Transverse colon (tissue), 4 donors: ENCODE measurements at regions of chr1 and their contacts with region 1.

Region 1: GRCh38 chr1:111656086-111657017 is 36.8 kb downstream of the RAP1A start:
- DNase-seq: peak; percentile 26
- H3K4me3 ChIP-seq: no peak overlapping the region
- H3K27ac ChIP-seq: peak overlapping the region; percentile 7 to 38 (median 15)
- H3K4me1 ChIP-seq: peaks cover 32 to 83% (median 37%) of the 10 kb centered on the region in 4 donors
- H3K27me3 ChIP-seq: no peaks in the 10 kb centered on the region
- CTCF ChIP-seq: peak; percentile 44 to 68 (median 62)
- EP300 ChIP-seq: no peak
- POLR2A ChIP-seq: no peak

Region 2: GRCh38 chr1:111139956-111140679 is 516.2 kb before region 1 on chr1 and contains the starts of genes CEPT1 and DRAM2:
- in situ Hi-C with region 1: no loop called
- intact Hi-C with region 1: no loop called
- DNase-seq: peak; percentile 96
- H3K4me3 ChIP-seq: peak within 1 kb of the TSS; percentile 83 to 92 (median 89)
- H3K27ac ChIP-seq: peak within 1 kb of the TSS; percentile 96 to 97 (median 97)
- H3K4me1 ChIP-seq: peaks cover 6 to 30% (median 27%) of the 10 kb centered on the region in 4 donors
- H3K27me3 ChIP-seq: no peaks in the 10 kb centered on the region
- CTCF ChIP-seq: no peak
- EP300 ChIP-seq: no peak
- POLR2A ChIP-seq: peak; percentile 79
- total RNA-seq, gene CEPT1: 11.2 to 55.6 (median 26.9) TPM
- total RNA-seq, gene DRAM2: 36.2 to 116 (median 81.7) TPM

Region 3: GRCh38 chr1:111290630-111291029 is 365.7 kb before region 1 on chr1 and contains the start of gene CHIA:
- in situ Hi-C with region 1: no loop called
- intact Hi-C with region 1: no loop called
- DNase-seq: no peak
- H3K4me3 ChIP-seq: no peak within 1 kb of the TSS
- H3K27ac ChIP-seq: no peak within 1 kb of the TSS
- H3K4me1 ChIP-seq: no peaks in the 10 kb centered on the region
- H3K27me3 ChIP-seq: peaks cover 4% of the 10 kb centered on the region
- CTCF ChIP-seq: no peak
- EP300 ChIP-seq: no peak
- POLR2A ChIP-seq: no peak
- total RNA-seq, gene CHIA: not detected

Region 4: GRCh38 chr1:111507411-111508201 is 148.7 kb before region 1 on chr1:
- in situ Hi-C with region 1: loop called in 1 of 4 experiments (anchors 10 kb)
- intact Hi-C with region 1: loop called (anchors 5 kb)
- DNase-seq: peak; percentile 84
- H3K4me3 ChIP-seq: peak overlapping the region in 3 of 4 donors; percentile 19 to 46 (median 30)
- H3K27ac ChIP-seq: peak overlapping the region; percentile 91 to 98 (median 98)
- H3K4me1 ChIP-seq: peaks cover 21 to 52% (median 37%) of the 10 kb centered on the region in 4 donors
- H3K27me3 ChIP-seq: no peaks in the 10 kb centered on the region
- CTCF ChIP-seq: no peak
- EP300 ChIP-seq: no peak
- POLR2A ChIP-seq: no peak